ENCODE measurements at regions of chr2 and their contacts with region 1.

Region 1: DNA sequence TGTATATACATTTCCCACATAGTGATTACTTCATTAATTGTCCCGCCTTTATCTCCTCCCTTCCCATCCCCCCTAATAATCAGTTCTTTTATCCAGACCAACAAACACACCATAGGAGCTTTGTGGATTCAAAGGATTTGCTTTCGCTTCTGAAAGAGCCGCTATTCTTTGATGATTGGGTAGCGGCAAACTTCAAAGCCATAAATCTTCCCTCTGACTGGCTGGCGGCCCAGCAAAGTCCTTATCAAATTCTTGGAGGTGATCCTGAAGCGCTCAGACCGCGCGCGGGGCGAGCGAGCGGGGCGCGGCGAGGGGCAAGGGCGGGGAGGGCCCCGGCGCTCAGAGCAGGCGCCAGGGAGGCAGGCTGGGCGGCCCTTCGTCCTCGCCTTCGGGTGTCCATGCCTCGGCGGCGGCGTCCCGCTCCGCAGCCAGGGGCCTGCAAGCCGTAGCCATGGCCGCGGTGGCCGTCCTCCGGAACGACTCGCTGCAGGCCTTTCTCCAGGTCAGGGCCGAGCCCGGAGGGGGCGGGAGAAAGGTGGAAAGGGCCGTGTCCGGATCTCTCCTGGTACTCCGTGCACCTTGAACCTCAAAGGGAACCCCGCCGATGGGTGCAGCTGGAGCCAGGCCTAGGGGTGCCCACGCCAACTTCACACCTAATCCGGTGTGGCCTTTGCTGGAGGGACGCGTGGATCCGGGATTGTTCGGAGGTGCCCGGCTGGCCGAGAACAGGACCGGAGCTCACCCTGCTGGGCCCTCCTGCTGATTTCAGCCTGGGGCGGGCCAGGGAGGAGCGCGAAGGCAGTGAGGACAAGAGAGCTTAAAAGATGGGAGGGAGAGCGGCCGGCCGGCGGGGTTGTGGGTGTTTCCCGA is at the start of gene SP5:
- DNase-seq: peak; percentile 25 to 31
- ATAC-seq: peak; percentile 44 to 67 (median 58)
- H3K4me3 ChIP-seq: peak within 1 kb of the TSS; percentile 27 to 63 (median 56)
- H3K27ac ChIP-seq: peak within 1 kb of the TSS in 6 of 10 donors; percentile 21 to 65 (median 52)
- H3K4me1 ChIP-seq: peaks cover 12 to 50% (median 36%) of the 10 kb centered on the region in 9 donors
- H3K27me3 ChIP-seq: peaks cover 41 to 100% (median 99%) of the 10 kb centered on the region in 7 donors
- CTCF ChIP-seq: no peak
- total RNA-seq, gene SP5: 0.15 to 0.97 (median 0.45) TPM in 8 of 10 donors, not detected in the others

Region 2: GRCh38 chr2:170409164-170409535 is 306.1 kb before region 1 on chr2:
- intact Hi-C with region 1: loop called in 2 of 10 experiments (anchors 10 kb)
- DNase-seq: peak; percentile 39 to 73
- ATAC-seq: peak in 1 of 8 donors; percentile 33
- H3K4me3 ChIP-seq: peak overlapping the region in 2 of 10 donors; percentile 15 to 20
- H3K27ac ChIP-seq: no peak overlapping the region
- H3K4me1 ChIP-seq: peaks cover 0 to 10% (median 7%) of the 10 kb centered on the region in 9 donors
- H3K27me3 ChIP-seq: peaks cover 0 to 46% (median 37%) of the 10 kb centered on the region in 7 donors
- CTCF ChIP-seq: peak; percentile 81 to 93 (median 88)

Region 3: GRCh38 chr2:170486730-170487129 is 228.6 kb before region 1 on chr2:
- intact Hi-C with region 1: loop called in 2 of 10 experiments (anchors 10 kb)
- DNase-seq: no peak
- ATAC-seq: no peak
- H3K4me3 ChIP-seq: no peak overlapping the region
- H3K27ac ChIP-seq: no peak overlapping the region
- H3K4me1 ChIP-seq: no peaks in the 10 kb centered on the region
- H3K27me3 ChIP-seq: no peaks in the 10 kb centered on the region
- CTCF ChIP-seq: peak in 7 of 9 donors; percentile 28 to 59 (median 42)

Region 4: GRCh38 chr2:170493426-170494097 is 221.7 kb before region 1 on chr2:
- intact Hi-C with region 1: loop called in 2 of 10 experiments (anchors 10 kb)
- DNase-seq: no peak
- ATAC-seq: no peak
- H3K4me3 ChIP-seq: no peak overlapping the region
- H3K27ac ChIP-seq: no peak overlapping the region
- H3K4me1 ChIP-seq: peaks cover 0 to 5% (median 0%) of the 10 kb centered on the region in 9 donors
- H3K27me3 ChIP-seq: peaks cover 0 to 12% (median 6%) of the 10 kb centered on the region in 7 donors
- CTCF ChIP-seq: no peak

Region 5: GRCh38 chr2:170505631-170506275 is 209.5 kb before region 1 on chr2:
- intact Hi-C with region 1: loop called in 2 of 10 experiments (anchors 10 kb)
- DNase-seq: peak; percentile 66 to 69
- ATAC-seq: peak; percentile 59 to 86 (median 78)
- H3K4me3 ChIP-seq: peak overlapping the region in 4 of 10 donors; percentile 22 to 29 (median 26)
- H3K27ac ChIP-seq: peak overlapping the region in 8 of 10 donors; percentile 20 to 68 (median 60)
- H3K4me1 ChIP-seq: peaks cover 0 to 47% (median 21%) of the 10 kb centered on the region in 9 donors
- H3K27me3 ChIP-seq: peaks cover 0 to 14% (median 0%) of the 10 kb centered on the region in 7 donors
- CTCF ChIP-seq: no peak

Region 6: GRCh38 chr2:171069286-171069956 is 354.1 kb after region 1 on chr2:
- intact Hi-C with region 1: no loop called
- DNase-seq: no peak
- ATAC-seq: no peak
- H3K4me3 ChIP-seq: no peak overlapping the region
- H3K27ac ChIP-seq: no peak overlapping the region
- H3K4me1 ChIP-seq: no peaks in the 10 kb centered on the region
- H3K27me3 ChIP-seq: no peaks in the 10 kb centered on the region
- CTCF ChIP-seq: no peak

Region 7: DNA sequence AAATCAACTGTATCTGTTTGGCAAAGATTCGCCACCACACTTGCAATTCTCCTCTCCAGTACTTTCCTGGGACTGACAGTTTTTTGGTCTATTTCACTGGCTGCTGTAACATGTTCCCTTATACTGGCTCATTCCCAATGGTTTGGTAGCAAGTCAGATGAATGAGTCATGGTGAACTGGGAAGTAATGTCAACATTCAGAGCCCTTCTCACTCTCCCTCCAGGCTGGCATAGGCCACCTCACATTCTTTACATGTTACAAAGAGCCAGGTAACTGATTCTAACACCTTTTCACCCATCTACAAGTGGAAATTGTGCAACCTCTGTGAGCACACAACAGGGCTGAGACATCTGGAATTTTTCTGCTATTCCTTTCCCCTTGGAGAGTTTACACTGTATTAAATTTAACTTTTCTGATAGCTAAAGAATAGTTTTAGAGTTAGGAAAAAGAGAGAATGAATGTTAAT is 556.7 kb after region 1 on chr2:
- intact Hi-C with region 1: no loop called
- DNase-seq: peak in 1 of 2 donors; percentile 20
- ATAC-seq: peak; percentile 75 to 98 (median 90)
- H3K4me3 ChIP-seq: no peak overlapping the region
- H3K27ac ChIP-seq: peak overlapping the region in 2 of 10 donors; percentile 23 to 47
- H3K4me1 ChIP-seq: peaks cover 0 to 17% (median 4%) of the 10 kb centered on the region in 9 donors
- H3K27me3 ChIP-seq: no peaks in the 10 kb centered on the region
- CTCF ChIP-seq: no peak

Measured in heart right ventricle (tissue), 16 donors.